CD4-positive, alpha-beta T cell (primary cell): ENCODE measurements at regions of chr1 and their contacts with region 1.

Region 1: GRCh38 chr1:231528172-231529029 is at the start of gene TSNAX:
- DNase-seq: peak; percentile 81 to 96 (median 88)
- ATAC-seq: peak; percentile 85
- H3K4me3 ChIP-seq: peak within 1 kb of the TSS; percentile 70
- H3K4me3 Mint-ChIP-seq: peak within 1 kb of the TSS; percentile 94
- H3K27ac ChIP-seq: peak within 1 kb of the TSS; percentile 84 to 89
- H3K27ac Mint-ChIP-seq: peak within 1 kb of the TSS; percentile 97
- H3K4me1 ChIP-seq: peaks cover 38% of the 10 kb centered on the region
- H3K4me1 Mint-ChIP-seq: peaks cover 46% of the 10 kb centered on the region
- H3K27me3 ChIP-seq: no peaks in the 10 kb centered on the region
- H3K27me3 Mint-ChIP-seq: no peaks in the 10 kb centered on the region
- CTCF ChIP-seq: no peak
- total RNA-seq, gene TSNAX: 33.5 to 35.7 TPM

Region 2: GRCh38 chr1:231240883-231241735 is 287.3 kb before region 1 on chr1 and contains the start of gene GNPAT:
- CTCF ChIA-PET with region 1: no interaction called
- POLR2A ChIA-PET with region 1: no interaction called
- intact Hi-C with region 1: loop called in 1 of 2 experiments (anchors 5 kb)
- DNase-seq: peak; percentile 83 to 95 (median 90)
- ATAC-seq: peak; percentile 95
- H3K4me3 ChIP-seq: peak within 1 kb of the TSS; percentile 93
- H3K4me3 Mint-ChIP-seq: peak within 1 kb of the TSS; percentile 98
- H3K27ac ChIP-seq: peak within 1 kb of the TSS; percentile 67 to 77
- H3K27ac Mint-ChIP-seq: peak within 1 kb of the TSS; percentile 87
- H3K4me1 ChIP-seq: peaks cover 30% of the 10 kb centered on the region
- H3K4me1 Mint-ChIP-seq: peaks cover 83% of the 10 kb centered on the region
- H3K27me3 ChIP-seq: no peaks in the 10 kb centered on the region
- H3K27me3 Mint-ChIP-seq: no peaks in the 10 kb centered on the region
- CTCF ChIP-seq: no peak
- total RNA-seq, gene GNPAT: 11.8 to 12.8 TPM

Region 3: DNA sequence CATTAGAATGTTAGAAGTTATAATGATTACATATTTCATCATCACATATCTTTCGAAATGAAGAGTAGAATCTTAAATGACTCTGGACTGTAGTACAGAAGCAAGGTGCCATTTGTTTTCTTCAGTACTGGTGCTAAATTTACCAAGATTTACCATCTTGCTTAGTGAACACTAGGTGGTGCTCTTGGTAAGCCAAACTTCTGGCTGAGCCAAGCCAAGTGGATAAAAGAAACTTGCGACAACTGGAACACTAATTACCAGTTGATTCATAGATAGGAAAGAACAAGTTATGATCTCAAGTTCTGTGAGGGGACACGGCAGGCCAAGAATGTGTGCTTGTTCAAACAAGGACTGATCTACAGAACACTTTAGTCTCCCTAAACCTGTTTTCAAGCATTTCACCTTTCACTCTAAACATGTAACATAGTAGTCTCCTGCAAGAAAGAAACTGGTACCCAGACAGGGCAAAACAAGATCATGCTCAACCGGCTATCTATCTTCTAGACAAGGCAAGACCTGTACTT is 170.5 kb before region 1 on chr1:
- CTCF ChIA-PET with region 1: interaction called, 3 read pairs
- POLR2A ChIA-PET with region 1: no interaction called
- intact Hi-C with region 1: loop called in 1 of 2 experiments (anchors 5 kb)
- DNase-seq: peak in 7 of 14 experiments; percentile 19 to 76 (median 47)
- ATAC-seq: peak; percentile 91
- H3K4me3 ChIP-seq: no peak overlapping the region
- H3K4me3 Mint-ChIP-seq: no peak overlapping the region
- H3K27ac ChIP-seq: no peak overlapping the region
- H3K27ac Mint-ChIP-seq: peak overlapping the region; percentile 51
- H3K4me1 ChIP-seq: no peaks in the 10 kb centered on the region
- H3K4me1 Mint-ChIP-seq: peaks cover 7% of the 10 kb centered on the region
- H3K27me3 ChIP-seq: no peaks in the 10 kb centered on the region
- H3K27me3 Mint-ChIP-seq: no peaks in the 10 kb centered on the region
- CTCF ChIP-seq: peak; percentile 88

Region 4: DNA sequence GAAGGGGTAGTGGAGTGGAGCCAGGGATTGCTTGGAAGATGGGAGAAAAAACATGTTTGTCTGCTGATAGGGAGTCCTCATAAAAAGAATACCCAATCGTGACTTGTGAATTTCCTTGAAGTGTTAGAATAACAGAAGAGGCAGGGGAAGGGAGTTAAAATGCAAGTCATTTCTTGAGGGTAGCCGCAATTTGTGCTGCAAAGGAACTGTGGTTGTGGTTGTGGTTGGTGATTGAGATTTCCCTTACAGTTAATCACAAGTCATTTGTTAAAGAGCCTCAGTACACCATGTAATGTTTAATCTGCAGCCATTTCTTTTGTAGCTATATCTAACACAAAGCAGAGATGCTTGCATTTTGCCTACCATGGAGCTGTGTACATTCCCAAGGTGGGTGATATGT is 67.8 kb before region 1 on chr1:
- CTCF ChIA-PET with region 1: no interaction called
- POLR2A ChIA-PET with region 1: interaction called, 4 read pairs
- intact Hi-C with region 1: loop called in 1 of 2 experiments (anchors 5 kb)
- DNase-seq: peak; percentile 6 to 84 (median 28)
- ATAC-seq: peak; percentile 72
- H3K4me3 ChIP-seq: no peak overlapping the region
- H3K4me3 Mint-ChIP-seq: no peak overlapping the region
- H3K27ac ChIP-seq: no peak overlapping the region
- H3K27ac Mint-ChIP-seq: no peak overlapping the region
- H3K4me1 ChIP-seq: peaks cover 5% of the 10 kb centered on the region
- H3K4me1 Mint-ChIP-seq: peaks cover 11% of the 10 kb centered on the region
- H3K27me3 ChIP-seq: peaks cover 17 to 47% of the 10 kb centered on the region in 2 experiments
- H3K27me3 Mint-ChIP-seq: peaks cover 81% of the 10 kb centered on the region
- CTCF ChIP-seq: no peak

Region 5: DNA sequence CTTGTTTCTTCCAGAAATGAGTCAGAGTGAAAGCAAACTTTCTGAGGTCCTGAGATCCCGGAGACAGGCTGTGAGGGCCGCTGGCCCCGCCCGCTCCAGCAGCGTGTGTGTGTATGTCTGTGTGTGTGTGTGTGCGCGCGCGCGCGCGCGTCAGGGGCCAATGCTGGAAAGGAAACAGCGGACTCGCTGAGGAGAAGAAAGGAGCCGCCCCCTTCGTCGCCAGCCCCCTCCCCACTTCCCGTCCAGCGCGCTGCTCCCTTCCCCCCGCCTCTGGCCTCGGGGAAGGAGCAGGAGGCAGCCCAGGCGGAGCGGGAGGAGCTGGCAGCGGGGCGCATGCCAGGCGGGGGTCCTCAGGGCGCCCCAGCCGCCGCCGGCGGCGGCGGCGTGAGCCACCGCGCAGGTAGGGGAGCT is 98.1 kb after region 1 on chr1 and contains the start of gene DISC1:
- CTCF ChIA-PET with region 1: interaction called, 3 read pairs
- POLR2A ChIA-PET with region 1: interaction called, 3 read pairs
- intact Hi-C with region 1: loop called in 1 of 2 experiments (anchors 10 kb)
- DNase-seq: peak; percentile 34 to 87 (median 62)
- ATAC-seq: peak; percentile 70
- H3K4me3 ChIP-seq: peak within 1 kb of the TSS; percentile 99
- H3K4me3 Mint-ChIP-seq: peak within 1 kb of the TSS; percentile 96
- H3K27ac ChIP-seq: peak within 1 kb of the TSS; percentile 68 to 76
- H3K27ac Mint-ChIP-seq: peak within 1 kb of the TSS; percentile 90
- H3K4me1 ChIP-seq: peaks cover 29% of the 10 kb centered on the region
- H3K4me1 Mint-ChIP-seq: peaks cover 33% of the 10 kb centered on the region
- H3K27me3 ChIP-seq: no peaks in the 10 kb centered on the region
- H3K27me3 Mint-ChIP-seq: no peaks in the 10 kb centered on the region
- CTCF ChIP-seq: no peak
- total RNA-seq, gene DISC1: 19.8 to 20.0 TPM

Region 6: DNA sequence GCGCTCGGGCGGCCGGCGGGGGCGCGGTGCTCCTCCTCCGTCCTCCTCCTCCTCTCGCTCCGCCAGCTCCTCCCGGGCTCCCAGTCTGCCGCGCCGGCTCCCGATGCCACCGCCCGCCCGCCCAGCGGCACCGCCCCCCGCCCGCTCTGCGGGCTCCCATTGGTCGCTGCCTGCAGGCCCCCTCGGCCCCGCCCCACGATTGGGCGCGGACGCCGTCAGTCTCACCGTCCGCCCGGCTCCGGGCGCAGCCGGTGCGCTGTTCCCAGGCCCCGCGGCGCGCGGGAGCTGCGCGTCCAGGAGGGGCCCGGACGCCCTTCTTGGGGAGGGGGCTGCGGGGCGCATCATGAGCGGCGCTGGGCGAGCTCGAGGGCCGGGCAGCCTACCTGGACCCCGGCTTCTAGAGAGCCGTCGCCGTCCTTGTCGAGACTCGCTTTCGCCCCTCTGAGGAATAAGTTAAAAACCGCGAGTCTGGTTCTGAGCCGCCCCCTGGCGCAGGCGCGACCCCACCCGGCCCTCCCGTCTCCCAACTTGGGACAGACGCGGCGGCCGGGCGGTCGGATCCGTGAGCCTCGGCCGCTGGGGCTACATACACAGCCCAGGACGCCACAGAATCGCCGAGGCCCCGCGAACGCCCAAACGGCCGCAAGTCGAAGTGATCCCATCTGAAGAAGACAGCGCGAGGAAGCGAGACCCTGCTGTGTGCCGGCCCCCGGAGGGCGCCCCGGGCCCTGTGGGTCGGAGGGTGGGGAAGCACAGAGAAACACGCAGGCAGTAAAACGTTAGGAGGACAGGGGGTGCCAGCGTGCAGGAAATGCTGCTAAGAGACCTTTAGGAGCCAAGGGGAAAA is 1101.9 kb after region 1 on chr1 and contains the start of gene SIPA1L2:
- CTCF ChIA-PET with region 1: no interaction called
- POLR2A ChIA-PET with region 1: no interaction called
- intact Hi-C with region 1: loop called in 1 of 2 experiments (anchors 10 kb)
- DNase-seq: peak; percentile 67 to 93 (median 82)
- ATAC-seq: peak; percentile 89
- H3K4me3 ChIP-seq: peak within 1 kb of the TSS; percentile 71
- H3K4me3 Mint-ChIP-seq: peak within 1 kb of the TSS; percentile 93
- H3K27ac ChIP-seq: no peak within 1 kb of the TSS
- H3K27ac Mint-ChIP-seq: peak within 1 kb of the TSS; percentile 42
- H3K4me1 ChIP-seq: peaks cover 18% of the 10 kb centered on the region
- H3K4me1 Mint-ChIP-seq: peaks cover 29% of the 10 kb centered on the region
- H3K27me3 ChIP-seq: peaks cover 6 to 19% of the 10 kb centered on the region in 2 experiments
- H3K27me3 Mint-ChIP-seq: peaks cover 39% of the 10 kb centered on the region
- CTCF ChIP-seq: peak; percentile 8
- total RNA-seq, gene SIPA1L2: 1.8 to 1.9 TPM